H1 (cell line): ENCODE measurements at regions of chr4 and their contacts with region 1.

Region 1: GRCh38 chr4:153541456-153542096 is 75.4 kb downstream of the TMEM131L start:
- DNase-seq: no peak
- H3K4me3 ChIP-seq: no peak overlapping the region
- H3K27ac ChIP-seq: no peak overlapping the region
- H3K4me1 ChIP-seq: peaks cover 5 to 21% (median 9%) of the 10 kb centered on the region in 4 experiments
- H3K27me3 ChIP-seq: no peaks in the 10 kb centered on the region
- CTCF ChIP-seq: no peak
- EP300 ChIP-seq: no peak
- POLR2A ChIP-seq: no peak
- RAD21 ChIP-seq: no peak

Region 2: DNA sequence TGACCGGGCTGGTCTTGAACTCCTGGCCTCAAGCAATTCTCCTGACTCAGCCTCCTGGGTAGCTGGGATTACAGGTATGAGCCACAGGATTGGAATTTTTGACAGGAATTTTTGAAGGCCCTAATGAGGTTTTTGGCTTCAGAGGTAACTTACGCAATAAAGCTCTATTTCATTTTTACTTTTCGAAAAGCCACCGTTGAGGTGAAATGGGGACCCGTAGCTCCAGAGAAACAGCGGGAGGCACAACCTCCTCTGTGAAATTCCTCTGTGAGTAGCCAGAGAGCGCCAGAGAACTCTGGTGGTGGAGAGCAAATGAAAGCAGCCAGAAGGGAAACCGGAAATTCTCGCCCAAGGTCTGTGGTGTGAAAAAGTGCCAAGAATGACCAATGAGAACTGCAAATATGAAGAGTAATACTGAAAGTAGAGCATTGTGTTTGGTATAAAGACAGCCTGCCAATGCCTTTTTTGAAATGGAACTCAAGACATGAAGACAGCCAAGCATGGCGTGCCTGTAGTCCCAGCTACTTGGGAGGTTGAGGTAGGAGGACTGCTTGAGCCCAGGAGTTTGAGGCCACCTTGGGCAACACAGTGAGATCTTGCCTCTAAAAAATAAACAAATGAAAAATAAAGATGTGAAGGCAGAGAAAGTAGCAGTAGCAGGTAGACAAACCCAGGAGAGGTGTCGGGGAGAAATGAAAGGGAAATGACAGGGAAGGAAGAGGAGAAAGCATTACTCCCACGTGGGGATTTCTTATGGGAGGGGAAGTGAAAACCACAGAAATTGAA is 108.4 kb before region 1 on chr4:
- CTCF ChIA-PET with region 1: interaction called, 20 read pairs
- POLR2A ChIA-PET with region 1: no interaction called
- DNase-seq: peak; percentile 19 to 62
- H3K4me3 ChIP-seq: no peak overlapping the region
- H3K27ac ChIP-seq: no peak overlapping the region
- H3K4me1 ChIP-seq: no peaks in the 10 kb centered on the region
- H3K27me3 ChIP-seq: no peaks in the 10 kb centered on the region
- CTCF ChIP-seq: peak; percentile 59 to 84 (median 80)
- EP300 ChIP-seq: no peak
- POLR2A ChIP-seq: no peak
- RAD21 ChIP-seq: peak; percentile 87

Region 3: GRCh38 chr4:153494562-153494961 is 47.0 kb before region 1 on chr4:
- CTCF ChIA-PET with region 1: interaction called, 19 read pairs
- POLR2A ChIA-PET with region 1: no interaction called
- DNase-seq: peak in 1 of 2 experiments; percentile 43
- H3K4me3 ChIP-seq: no peak overlapping the region
- H3K27ac ChIP-seq: no peak overlapping the region
- H3K4me1 ChIP-seq: peaks cover 1 to 18% (median 13%) of the 10 kb centered on the region in 4 experiments; a peak in 5 of 7 replicates
- H3K27me3 ChIP-seq: no peaks in the 10 kb centered on the region
- CTCF ChIP-seq: no peak
- EP300 ChIP-seq: no peak
- POLR2A ChIP-seq: no peak
- RAD21 ChIP-seq: no peak

Region 4: GRCh38 chr4:153514001-153514526 is 27.5 kb before region 1 on chr4:
- CTCF ChIA-PET with region 1: interaction called, 10 read pairs
- POLR2A ChIA-PET with region 1: no interaction called
- DNase-seq: no peak
- H3K4me3 ChIP-seq: no peak overlapping the region
- H3K27ac ChIP-seq: no peak overlapping the region
- H3K4me1 ChIP-seq: peaks cover 0 to 5% (median 4%) of the 10 kb centered on the region in 4 experiments; a peak in 3 of 7 replicates
- H3K27me3 ChIP-seq: no peaks in the 10 kb centered on the region
- CTCF ChIP-seq: no peak
- EP300 ChIP-seq: no peak
- POLR2A ChIP-seq: no peak
- RAD21 ChIP-seq: no peak

Region 5: GRCh38 chr4:153555730-153556433 is 14.3 kb after region 1 on chr4:
- CTCF ChIA-PET with region 1: interaction called, 19 read pairs
- POLR2A ChIA-PET with region 1: no interaction called
- DNase-seq: no peak
- H3K4me3 ChIP-seq: no peak overlapping the region
- H3K27ac ChIP-seq: no peak overlapping the region
- H3K4me1 ChIP-seq: no peaks in the 10 kb centered on the region
- H3K27me3 ChIP-seq: no peaks in the 10 kb centered on the region
- CTCF ChIP-seq: no peak
- EP300 ChIP-seq: no peak
- POLR2A ChIP-seq: no peak
- RAD21 ChIP-seq: no peak

Region 6: DNA sequence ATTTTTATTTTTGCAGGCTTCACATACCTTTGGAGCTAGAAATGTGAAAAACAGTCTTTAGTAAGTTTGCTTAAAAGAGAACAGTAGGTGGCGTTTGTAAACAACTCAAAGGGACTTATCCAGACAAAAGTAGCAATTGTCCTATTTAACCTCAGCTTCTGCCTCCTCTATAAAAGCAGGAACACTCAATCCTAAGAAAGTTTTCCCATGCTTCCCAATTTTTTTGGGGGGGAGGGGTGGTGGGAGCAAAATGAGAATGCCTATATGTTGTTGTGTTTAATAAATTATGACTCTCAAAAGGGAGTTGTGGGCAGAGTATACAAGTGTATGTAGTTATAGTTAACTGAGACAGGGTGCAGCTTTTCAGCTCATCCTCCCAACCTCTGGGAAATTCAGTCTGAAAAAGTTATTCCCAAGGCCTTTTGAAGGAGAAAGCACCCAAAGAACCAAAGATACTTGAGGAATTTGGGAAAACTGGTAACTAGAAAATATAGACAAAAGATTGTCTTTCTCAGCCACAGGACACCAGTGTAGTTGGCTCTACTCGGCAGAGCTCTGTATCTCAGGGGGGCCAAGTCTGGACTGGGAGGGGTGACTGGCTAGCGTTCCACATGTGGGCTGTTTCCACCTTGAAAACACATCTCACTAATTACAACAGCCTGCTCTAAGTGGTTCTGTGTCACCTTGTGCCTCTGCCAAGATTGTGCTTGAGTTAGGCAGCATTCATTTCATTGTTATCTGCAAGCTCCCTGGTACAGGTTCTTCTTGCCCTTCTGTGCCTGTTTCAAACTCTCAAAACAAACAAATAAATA is 244.5 kb after region 1 on chr4:
- CTCF ChIA-PET with region 1: no interaction called
- POLR2A ChIA-PET with region 1: no interaction called
- DNase-seq: no peak
- H3K4me3 ChIP-seq: peak overlapping the region; percentile 80 to 94 (median 94)
- H3K27ac ChIP-seq: no peak overlapping the region
- H3K4me1 ChIP-seq: peaks cover 1 to 17% (median 9%) of the 10 kb centered on the region in 4 experiments
- H3K27me3 ChIP-seq: no peaks in the 10 kb centered on the region
- CTCF ChIP-seq: peak in 2 of 3 experiments; percentile 17 to 37; a peak in 2 of 4 replicates
- EP300 ChIP-seq: no peak
- POLR2A ChIP-seq: peak in 1 of 2 experiments; percentile 33; a peak in 1 of 3 replicates
- RAD21 ChIP-seq: peak in 1 of 2 experiments; percentile 30; a peak in 2 of 4 replicates